GM12878 (cell line): ENCODE measurements at regions of chr19 and their contacts with region 1.

Region 1: DNA sequence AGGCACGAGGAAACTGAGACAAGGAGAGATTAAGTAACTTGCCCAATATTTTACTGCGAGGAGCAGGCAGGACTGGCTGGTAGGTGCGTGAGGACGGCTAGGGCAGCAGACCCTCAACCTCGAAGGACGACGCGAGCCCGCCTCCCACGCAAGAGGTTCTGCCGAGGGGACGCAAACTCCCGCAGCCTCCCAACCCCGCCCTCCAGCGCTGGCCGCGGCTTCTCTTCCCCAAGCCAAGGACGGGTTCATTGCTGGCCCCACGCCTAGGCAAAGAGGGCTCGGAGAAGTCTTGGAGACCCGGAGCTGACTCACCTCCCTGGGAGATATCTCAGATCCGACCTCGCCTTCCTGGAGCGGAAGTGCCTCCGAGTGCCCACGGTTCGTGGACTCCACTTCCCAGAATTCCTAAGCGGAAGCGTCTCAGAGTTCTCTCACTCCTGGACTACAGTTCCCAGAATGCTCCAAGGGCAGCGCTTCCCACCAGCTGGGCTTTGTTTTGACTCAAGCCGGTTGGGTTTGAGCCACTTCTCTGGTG is at the start of gene ZNF235:
- DNase-seq: peak; percentile 69
- ATAC-seq: peak; percentile 99
- H3K4me3 ChIP-seq: peak within 1 kb of the TSS; percentile 90
- H3K27ac ChIP-seq: peak within 1 kb of the TSS; percentile 78
- H3K4me1 ChIP-seq: peaks cover 7% of the 10 kb centered on the region
- H3K27me3 ChIP-seq: no peaks in the 10 kb centered on the region
- CTCF ChIP-seq: no peak
- EP300 ChIP-seq: no peak
- POLR2A ChIP-seq: peak; percentile 75
- RAD21 ChIP-seq: no peak
- polyA plus RNA-seq, gene ZNF235: 2.8 to 5.0 TPM

Region 2: GRCh38 chr19:44113138-44113783 is 191.5 kb before region 1 on chr19 and contains the start of gene ZNF225:
- CTCF ChIA-PET with region 1: no interaction called
- POLR2A ChIA-PET with region 1: no interaction called
- RAD21 ChIA-PET with region 1: no interaction called
- SMC1A ChIA-PET with region 1: no interaction called
- in situ Hi-C with region 1: loop called (anchors 5 kb)
- intact Hi-C with region 1: no loop called
- DNase-seq: peak; percentile 87
- ATAC-seq: peak; percentile 98
- H3K4me3 ChIP-seq: peak within 1 kb of the TSS; percentile 91
- H3K27ac ChIP-seq: peak within 1 kb of the TSS; percentile 73
- H3K4me1 ChIP-seq: no peaks in the 10 kb centered on the region
- H3K27me3 ChIP-seq: no peaks in the 10 kb centered on the region
- CTCF ChIP-seq: no peak
- EP300 ChIP-seq: no peak
- POLR2A ChIP-seq: peak; percentile 71
- RAD21 ChIP-seq: no peak
- polyA plus RNA-seq, gene ZNF225: 1.3 to 1.4 TPM

Region 3: DNA sequence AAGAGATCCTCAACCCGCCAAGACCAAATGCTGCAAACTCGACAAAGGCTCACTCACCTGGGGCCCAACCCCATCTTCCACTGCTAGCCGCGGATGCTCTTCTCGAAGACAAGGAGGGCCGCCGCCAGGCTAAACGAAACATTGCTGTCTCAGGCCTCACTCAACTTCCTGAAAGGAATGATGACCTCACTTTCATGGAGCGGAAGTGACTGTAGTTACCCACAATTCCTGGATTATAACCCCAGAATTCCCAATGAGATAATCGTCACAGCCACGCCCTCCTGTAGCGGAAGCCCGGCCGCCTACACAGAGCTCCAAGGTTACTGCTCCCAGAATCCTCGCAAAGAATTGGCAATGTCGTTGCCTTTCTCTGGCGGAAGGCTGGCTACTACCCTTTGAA is 62.3 kb after region 1 on chr19:
- CTCF ChIA-PET with region 1: no interaction called
- POLR2A ChIA-PET with region 1: no interaction called
- RAD21 ChIA-PET with region 1: no interaction called
- SMC1A ChIA-PET with region 1: no interaction called
- in situ Hi-C with region 1: no loop called
- intact Hi-C with region 1: no loop called
- DNase-seq: no peak
- ATAC-seq: no peak
- H3K4me3 ChIP-seq: no peak overlapping the region
- H3K27ac ChIP-seq: no peak overlapping the region
- H3K4me1 ChIP-seq: no peaks in the 10 kb centered on the region
- H3K27me3 ChIP-seq: no peaks in the 10 kb centered on the region
- CTCF ChIP-seq: no peak
- EP300 ChIP-seq: no peak
- POLR2A ChIP-seq: no peak
- RAD21 ChIP-seq: no peak

Region 4: GRCh38 chr19:44430956-44431355 is 126.2 kb after region 1 on chr19:
- CTCF ChIA-PET with region 1: no interaction called
- POLR2A ChIA-PET with region 1: no interaction called
- RAD21 ChIA-PET with region 1: no interaction called
- SMC1A ChIA-PET with region 1: no interaction called
- in situ Hi-C with region 1: no loop called
- intact Hi-C with region 1: no loop called
- DNase-seq: no peak
- ATAC-seq: no peak
- H3K4me3 ChIP-seq: no peak overlapping the region
- H3K27ac ChIP-seq: no peak overlapping the region
- H3K4me1 ChIP-seq: no peaks in the 10 kb centered on the region
- H3K27me3 ChIP-seq: no peaks in the 10 kb centered on the region
- CTCF ChIP-seq: no peak
- EP300 ChIP-seq: no peak
- POLR2A ChIP-seq: no peak
- RAD21 ChIP-seq: no peak

Region 5: DNA sequence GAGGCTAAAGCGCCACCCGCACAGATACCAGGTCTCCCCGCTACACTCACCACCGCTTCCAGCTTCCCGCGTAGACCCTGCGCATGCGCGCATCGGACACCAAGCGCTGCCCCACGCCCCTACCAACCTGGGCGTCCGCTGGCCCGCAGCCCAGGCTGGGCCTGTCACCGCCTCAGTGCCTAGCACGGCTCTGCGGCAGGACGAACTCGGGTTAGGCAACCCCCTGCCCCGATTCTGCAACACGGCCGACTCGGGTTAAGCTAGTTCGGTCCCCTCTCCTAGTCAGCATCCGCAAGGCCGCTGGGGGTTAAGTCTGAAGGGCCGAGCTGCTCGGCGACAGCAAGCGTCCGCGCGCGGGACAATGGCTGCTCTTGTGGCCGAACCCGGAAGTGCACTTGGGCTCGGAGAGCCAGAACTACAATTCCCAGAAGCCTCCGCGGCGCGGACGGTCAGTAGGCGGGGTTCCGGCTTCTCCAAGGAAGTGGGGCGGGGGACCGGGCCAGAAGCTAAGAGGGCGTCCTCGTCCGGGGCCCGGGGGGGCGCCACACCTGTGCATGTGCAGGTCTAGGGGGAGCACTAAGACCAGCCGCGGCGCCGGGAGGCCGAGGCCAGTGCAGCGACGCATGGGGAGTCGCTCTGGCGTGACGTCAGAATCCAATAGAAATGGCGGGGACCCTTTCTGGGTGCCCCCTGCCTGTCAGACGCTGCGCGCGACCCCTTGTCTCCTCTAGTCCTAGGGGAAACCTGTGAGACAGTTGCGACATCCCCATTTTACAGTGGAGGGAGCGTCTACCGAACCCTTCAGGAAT is 195.6 kb after region 1 on chr19 and contains the start of gene ZNF180:
- CTCF ChIA-PET with region 1: no interaction called
- POLR2A ChIA-PET with region 1: no interaction called
- RAD21 ChIA-PET with region 1: interaction called, 5 read pairs
- SMC1A ChIA-PET with region 1: interaction called, 3 read pairs
- in situ Hi-C with region 1: no loop called
- intact Hi-C with region 1: loop called (anchors 10 kb)
- DNase-seq: peak; percentile 80
- ATAC-seq: peak; percentile 94
- H3K4me3 ChIP-seq: peak within 1 kb of the TSS; percentile 69
- H3K27ac ChIP-seq: peak within 1 kb of the TSS; percentile 81
- H3K4me1 ChIP-seq: peaks cover 6% of the 10 kb centered on the region; the same call in 1 of the 2 replicates
- H3K27me3 ChIP-seq: no peaks in the 10 kb centered on the region
- CTCF ChIP-seq: peak in 2 of 3 experiments; percentile 26 to 39; a peak in 1 of 6 replicates
- EP300 ChIP-seq: 0 out of 4 replicates have a peak, but pooled peaks of 1 of the 2 experiments have one; percentile 19
- POLR2A ChIP-seq: peak; percentile 94
- RAD21 ChIP-seq: no peak
- polyA plus RNA-seq, gene ZNF180: 1.6 to 3.1 TPM